ENCODE measurements at regions of chr4 and their contacts with region 1.

Region 1: DNA sequence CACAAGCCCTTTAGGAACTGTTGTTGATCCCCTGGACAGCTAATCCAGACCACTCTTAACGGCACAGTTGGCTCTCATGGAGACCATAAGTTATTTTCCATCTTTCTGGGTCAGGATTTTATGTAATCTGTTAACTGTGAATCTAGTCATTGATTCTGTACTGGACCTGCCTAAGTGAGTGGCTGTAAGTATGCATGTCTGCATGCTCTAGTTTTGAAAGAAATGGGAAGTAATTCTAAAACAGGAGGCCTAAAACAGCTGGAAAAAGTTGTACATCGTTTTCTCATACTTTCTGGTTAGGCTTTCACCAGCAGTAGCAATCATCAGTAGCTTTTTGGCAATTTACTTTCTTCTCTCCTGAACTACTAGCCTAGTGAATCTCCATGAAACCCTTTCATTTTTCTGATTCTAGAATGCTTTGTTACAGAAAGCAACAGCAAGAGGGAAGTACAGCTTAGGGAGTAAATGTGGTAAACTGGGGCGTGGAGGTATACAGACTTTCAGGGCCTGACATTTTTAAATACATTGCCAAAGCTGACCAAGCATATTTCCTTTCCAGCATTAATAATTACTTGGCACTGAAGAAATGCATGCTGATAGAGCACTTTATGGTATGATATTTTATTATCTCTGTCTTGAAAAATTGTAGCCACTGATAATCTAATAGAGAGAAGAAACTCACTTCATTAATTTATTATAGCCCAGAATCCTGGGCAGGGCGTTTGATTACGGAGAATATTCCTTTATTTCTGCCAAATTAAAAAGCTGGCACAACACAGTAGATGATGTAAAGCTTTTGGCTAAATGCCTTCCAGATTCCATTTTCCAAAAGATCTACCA is 202.7 kb downstream of the BANK1 start:
- DNase-seq: peak; percentile 27
- ATAC-seq: peak; percentile 51
- H3K4me3 ChIP-seq: no peak overlapping the region
- H3K4me3 Mint-ChIP-seq: peak overlapping the region; percentile 63
- H3K27ac ChIP-seq: peak overlapping the region; percentile 30 to 61
- H3K27ac Mint-ChIP-seq: peak overlapping the region; percentile 84
- H3K4me1 ChIP-seq: peaks cover 53 to 72% of the 10 kb centered on the region in 2 donors
- H3K4me1 Mint-ChIP-seq: peaks cover 91% of the 10 kb centered on the region
- H3K27me3 ChIP-seq: no peaks in the 10 kb centered on the region
- H3K27me3 Mint-ChIP-seq: no peaks in the 10 kb centered on the region
- CTCF ChIP-seq: no peak

Region 2: DNA sequence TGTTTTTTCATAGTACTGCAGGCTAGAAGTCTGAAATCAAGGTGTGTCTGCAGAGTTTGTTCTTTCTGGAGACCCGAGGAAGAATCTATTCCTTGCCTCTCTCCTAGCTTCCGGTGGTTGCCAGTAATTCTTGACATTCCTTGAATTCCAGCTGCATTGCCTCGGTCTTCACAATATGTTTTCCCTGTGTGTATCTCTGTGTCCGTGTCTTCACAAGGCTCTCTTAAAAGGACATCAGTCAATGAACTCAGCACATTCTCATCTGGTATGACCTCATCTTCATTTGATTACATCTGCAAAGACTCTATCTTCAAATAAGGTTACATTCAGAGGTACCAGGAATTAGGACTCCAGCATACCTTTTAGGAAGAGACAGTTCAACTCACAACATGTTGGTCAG is 39.3 kb before region 1 on chr4:
- CTCF ChIA-PET with region 1: interaction called, 4 read pairs
- POLR2A ChIA-PET with region 1: no interaction called
- intact Hi-C with region 1: loop called (anchors 5 kb)
- DNase-seq: no peak
- ATAC-seq: no peak
- H3K4me3 ChIP-seq: no peak overlapping the region
- H3K4me3 Mint-ChIP-seq: no peak overlapping the region
- H3K27ac ChIP-seq: peak overlapping the region in 1 of 2 donors; percentile 59
- H3K27ac Mint-ChIP-seq: peak overlapping the region; percentile 57
- H3K4me1 ChIP-seq: no peaks in the 10 kb centered on the region
- H3K4me1 Mint-ChIP-seq: peaks cover 47% of the 10 kb centered on the region
- H3K27me3 ChIP-seq: no peaks in the 10 kb centered on the region
- H3K27me3 Mint-ChIP-seq: no peaks in the 10 kb centered on the region
- CTCF ChIP-seq: no peak

Region 3: DNA sequence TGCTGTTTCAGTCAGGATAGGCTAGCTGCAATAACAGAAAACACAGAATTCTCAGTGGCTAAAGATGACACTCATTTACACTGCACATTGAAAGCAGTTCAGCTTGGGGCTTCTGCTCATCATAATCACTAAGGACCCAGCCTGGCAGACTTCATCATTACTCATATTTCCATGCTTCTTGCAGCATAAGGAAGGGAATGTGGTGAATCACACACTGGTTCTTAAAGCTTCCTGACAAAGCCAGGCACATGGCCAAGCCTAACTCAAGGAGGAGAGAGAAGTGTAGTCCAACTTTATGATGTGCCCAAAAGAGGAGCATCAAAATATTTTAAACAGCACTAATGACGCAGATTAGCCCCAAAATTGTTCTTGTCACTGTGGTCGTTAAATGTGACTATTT is 16.1 kb before region 1 on chr4:
- CTCF ChIA-PET with region 1: interaction called, 3 read pairs
- POLR2A ChIA-PET with region 1: no interaction called
- intact Hi-C with region 1: loop called (anchors 2 kb)
- DNase-seq: no peak
- ATAC-seq: no peak
- H3K4me3 ChIP-seq: no peak overlapping the region
- H3K4me3 Mint-ChIP-seq: no peak overlapping the region
- H3K27ac ChIP-seq: peak overlapping the region in 1 of 2 donors; percentile 53
- H3K27ac Mint-ChIP-seq: peak overlapping the region; percentile 77
- H3K4me1 ChIP-seq: peaks cover 10 to 22% of the 10 kb centered on the region in 2 donors
- H3K4me1 Mint-ChIP-seq: peaks cover 62% of the 10 kb centered on the region
- H3K27me3 ChIP-seq: no peaks in the 10 kb centered on the region
- H3K27me3 Mint-ChIP-seq: no peaks in the 10 kb centered on the region
- CTCF ChIP-seq: no peak

Region 4: GRCh38 chr4:102157984-102158383 is 164.8 kb after region 1 on chr4:
- CTCF ChIA-PET with region 1: no interaction called
- POLR2A ChIA-PET with region 1: no interaction called
- intact Hi-C with region 1: no loop called
- DNase-seq: no peak
- ATAC-seq: no peak
- H3K4me3 ChIP-seq: no peak overlapping the region
- H3K4me3 Mint-ChIP-seq: no peak overlapping the region
- H3K27ac ChIP-seq: no peak overlapping the region
- H3K27ac Mint-ChIP-seq: no peak overlapping the region
- H3K4me1 ChIP-seq: no peaks in the 10 kb centered on the region
- H3K4me1 Mint-ChIP-seq: no peaks in the 10 kb centered on the region
- H3K27me3 ChIP-seq: no peaks in the 10 kb centered on the region
- H3K27me3 Mint-ChIP-seq: no peaks in the 10 kb centered on the region
- CTCF ChIP-seq: no peak

Measured in B cell (primary cell).